ENCODE measurements at regions of chr12 and their contacts with region 1.

Region 1: GRCh38 chr12:3885277-3886094 is 12.3 kb upstream of the PARP11 start:
- DNase-seq: no peak
- H3K4me3 ChIP-seq: peak overlapping the region in 3 of 4 donors; percentile 16 to 46 (median 19)
- H3K27ac ChIP-seq: peak overlapping the region; percentile 59 to 67 (median 64)
- H3K4me1 ChIP-seq: peaks cover 0 to 9% (median 2%) of the 10 kb centered on the region in 4 donors
- H3K27me3 ChIP-seq: peaks cover 8% of the 10 kb centered on the region
- CTCF ChIP-seq: peak; percentile 77 to 90 (median 82)
- EP300 ChIP-seq: no peak
- POLR2A ChIP-seq: no peak

Region 2: GRCh38 chr12:3920351-3921150 is 35.1 kb after region 1 on chr12:
- in situ Hi-C with region 1: no loop called
- intact Hi-C with region 1: no loop called
- DNase-seq: peak; percentile 13
- H3K4me3 ChIP-seq: no peak overlapping the region
- H3K27ac ChIP-seq: no peak overlapping the region
- H3K4me1 ChIP-seq: no peaks in the 10 kb centered on the region
- H3K27me3 ChIP-seq: peaks cover 28% of the 10 kb centered on the region
- CTCF ChIP-seq: no peak
- EP300 ChIP-seq: no peak
- POLR2A ChIP-seq: no peak

Region 3: DNA sequence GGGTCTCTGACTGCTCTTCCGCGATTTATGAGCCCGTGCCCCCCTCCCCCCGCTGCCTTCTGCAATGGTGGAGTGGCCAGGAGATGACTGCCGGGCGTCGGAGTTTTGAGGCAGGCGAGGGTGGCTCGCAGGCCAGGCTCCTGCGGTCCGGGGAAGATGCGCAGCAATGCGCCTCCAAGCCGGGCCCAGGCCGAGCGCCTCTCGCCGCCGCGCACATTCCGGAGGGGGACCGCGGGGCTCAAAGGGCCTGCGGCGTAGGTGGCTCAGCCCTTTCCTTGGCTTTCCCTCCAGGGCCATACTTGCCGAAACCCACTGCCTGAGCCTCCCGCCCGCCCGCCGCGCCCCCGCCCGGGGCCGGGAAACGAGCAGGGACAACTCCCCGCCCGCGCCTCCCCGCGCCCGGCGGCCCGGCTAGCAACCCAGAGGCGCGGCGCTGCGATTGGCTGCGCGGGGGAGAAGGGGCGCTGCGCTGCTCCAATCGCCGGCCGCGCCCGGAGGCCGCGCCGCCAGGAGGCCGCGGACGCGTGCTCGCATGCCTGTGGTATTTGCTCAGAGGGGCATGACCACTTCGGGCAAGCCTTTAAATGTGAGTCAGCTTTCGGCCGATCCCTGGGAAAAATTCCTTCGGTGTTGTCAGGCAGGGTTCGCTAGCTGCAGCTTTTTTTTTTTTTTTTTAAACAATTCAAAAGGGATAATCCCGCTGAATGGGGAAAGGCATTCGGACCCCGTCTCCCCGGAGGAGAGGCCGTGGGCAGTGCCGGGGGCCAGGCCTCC is 145.6 kb after region 1 on chr12:
- in situ Hi-C with region 1: loop called in 2 of 4 experiments (anchors 5 to 25 kb)
- intact Hi-C with region 1: no loop called
- DNase-seq: peak; percentile 92
- H3K4me3 ChIP-seq: peak overlapping the region; percentile 42 to 56 (median 45)
- H3K27ac ChIP-seq: peak overlapping the region; percentile 84 to 88 (median 86)
- H3K4me1 ChIP-seq: peaks cover 8 to 21% (median 13%) of the 10 kb centered on the region in 4 donors
- H3K27me3 ChIP-seq: no peaks in the 10 kb centered on the region
- CTCF ChIP-seq: no peak
- EP300 ChIP-seq: no peak
- POLR2A ChIP-seq: peak; percentile 45

Region 4: DNA sequence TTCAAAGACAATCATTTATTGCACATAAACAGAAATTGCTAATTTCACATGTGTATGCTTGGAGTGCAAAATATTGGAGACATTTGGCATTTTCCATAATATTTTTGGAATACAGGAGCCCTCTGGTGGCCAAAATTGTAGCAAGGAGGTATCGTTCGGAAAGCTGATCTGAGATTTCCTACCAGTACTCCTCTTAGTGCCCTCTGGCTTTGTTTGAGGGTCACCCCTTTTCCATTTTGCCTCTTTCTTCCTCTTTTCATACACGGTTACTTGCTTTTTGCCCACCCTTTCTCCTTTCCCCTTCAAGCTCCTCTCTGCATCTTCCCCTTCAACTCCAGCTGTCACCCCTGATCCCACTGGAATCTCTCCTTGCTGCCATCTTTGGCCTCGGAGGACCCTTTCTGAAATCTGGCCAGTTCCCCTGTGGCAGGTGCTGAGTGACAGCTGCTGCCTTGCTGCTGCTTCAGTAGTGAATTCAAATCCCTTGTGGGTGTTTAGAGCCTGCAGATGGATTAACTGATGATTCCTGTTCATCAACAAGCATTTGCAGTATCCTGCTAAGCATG is 152.3 kb after region 1 on chr12:
- in situ Hi-C with region 1: loop called in 2 of 4 experiments (anchors 5 to 25 kb)
- intact Hi-C with region 1: no loop called
- DNase-seq: peak; percentile 46
- H3K4me3 ChIP-seq: no peak overlapping the region
- H3K27ac ChIP-seq: peak overlapping the region; percentile 65 to 78 (median 74)
- H3K4me1 ChIP-seq: peaks cover 4 to 29% (median 17%) of the 10 kb centered on the region in 4 donors
- H3K27me3 ChIP-seq: no peaks in the 10 kb centered on the region
- CTCF ChIP-seq: peak; percentile 70 to 79 (median 72)
- EP300 ChIP-seq: no peak
- POLR2A ChIP-seq: no peak

Measured in transverse colon (tissue), 4 donors.